CD14-positive monocyte (primary cell): ENCODE measurements at regions of chr10 and their contacts with region 1.

Region 1: GRCh38 chr10:70832852-70833528 is 17.2 kb downstream of the SGPL1 start:
- DNase-seq: peak; percentile 68 to 93 (median 84)
- H3K4me3 ChIP-seq: peak overlapping the region in 1 of 3 experiments; percentile 2
- H3K4me3 Mint-ChIP-seq: peak overlapping the region in 1 of 2 donors; percentile 35
- H3K27ac ChIP-seq: peak overlapping the region in 1 of 2 donors; percentile 66
- H3K27ac Mint-ChIP-seq: peak overlapping the region; percentile 26 to 83 (median 59)
- H3K4me1 ChIP-seq: peaks cover 30 to 33% of the 10 kb centered on the region in 2 donors
- H3K4me1 Mint-ChIP-seq: peaks cover 36% of the 10 kb centered on the region
- H3K27me3 ChIP-seq: no peaks in the 10 kb centered on the region
- H3K27me3 Mint-ChIP-seq: no peaks in the 10 kb centered on the region
- CTCF ChIP-seq: no peak

Region 2: GRCh38 chr10:70493660-70494234 is 339.2 kb before region 1 on chr10:
- intact Hi-C with region 1: no loop called
- DNase-seq: peak in 1 of 3 donors; percentile 33
- H3K4me3 ChIP-seq: peak overlapping the region in 1 of 3 experiments; percentile 44
- H3K4me3 Mint-ChIP-seq: peak overlapping the region; percentile 49 to 79
- H3K27ac ChIP-seq: peak overlapping the region in 1 of 2 donors; percentile 58
- H3K27ac Mint-ChIP-seq: peak overlapping the region in 6 of 7 donors; percentile 19 to 80 (median 64)
- H3K4me1 ChIP-seq: peaks cover 29 to 34% of the 10 kb centered on the region in 2 donors
- H3K4me1 Mint-ChIP-seq: peaks cover 39% of the 10 kb centered on the region
- H3K27me3 ChIP-seq: no peaks in the 10 kb centered on the region
- H3K27me3 Mint-ChIP-seq: peaks cover 9 to 13% (median 10%) of the 10 kb centered on the region in 3 donors
- CTCF ChIP-seq: no peak

Region 3: DNA sequence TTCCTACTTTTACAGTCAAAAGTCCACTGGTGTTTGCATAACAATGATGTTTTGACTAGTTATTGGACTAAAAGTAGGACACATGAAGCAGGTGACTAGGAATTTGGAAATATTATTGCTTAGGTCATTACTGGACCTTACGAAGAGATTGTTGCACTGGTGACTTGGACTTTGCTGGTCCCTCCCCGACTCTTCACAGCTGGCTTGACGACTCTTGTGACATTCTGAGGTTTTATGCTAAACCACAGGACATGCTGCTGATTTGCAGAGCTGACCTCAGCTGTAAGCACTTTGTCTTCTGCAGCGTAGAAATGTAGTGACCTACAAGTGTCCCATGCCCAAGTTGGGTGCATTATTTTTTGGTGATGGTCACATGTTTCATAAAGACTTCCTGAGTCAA is 33.4 kb after region 1 on chr10:
- intact Hi-C with region 1: loop called in 1 of 2 experiments (anchors 5 kb)
- DNase-seq: peak; percentile 44 to 73 (median 61)
- H3K4me3 ChIP-seq: no peak overlapping the region
- H3K4me3 Mint-ChIP-seq: no peak overlapping the region
- H3K27ac ChIP-seq: no peak overlapping the region
- H3K27ac Mint-ChIP-seq: peak overlapping the region; percentile 20 to 92 (median 86)
- H3K4me1 ChIP-seq: peaks cover 19 to 21% of the 10 kb centered on the region in 2 donors
- H3K4me1 Mint-ChIP-seq: peaks cover 28% of the 10 kb centered on the region
- H3K27me3 ChIP-seq: no peaks in the 10 kb centered on the region
- H3K27me3 Mint-ChIP-seq: peaks cover 0 to 4% (median 0%) of the 10 kb centered on the region in 3 donors
- CTCF ChIP-seq: no peak